B cell (primary cell): ENCODE measurements at regions of chr1 and their contacts with region 1.

Region 1: DNA sequence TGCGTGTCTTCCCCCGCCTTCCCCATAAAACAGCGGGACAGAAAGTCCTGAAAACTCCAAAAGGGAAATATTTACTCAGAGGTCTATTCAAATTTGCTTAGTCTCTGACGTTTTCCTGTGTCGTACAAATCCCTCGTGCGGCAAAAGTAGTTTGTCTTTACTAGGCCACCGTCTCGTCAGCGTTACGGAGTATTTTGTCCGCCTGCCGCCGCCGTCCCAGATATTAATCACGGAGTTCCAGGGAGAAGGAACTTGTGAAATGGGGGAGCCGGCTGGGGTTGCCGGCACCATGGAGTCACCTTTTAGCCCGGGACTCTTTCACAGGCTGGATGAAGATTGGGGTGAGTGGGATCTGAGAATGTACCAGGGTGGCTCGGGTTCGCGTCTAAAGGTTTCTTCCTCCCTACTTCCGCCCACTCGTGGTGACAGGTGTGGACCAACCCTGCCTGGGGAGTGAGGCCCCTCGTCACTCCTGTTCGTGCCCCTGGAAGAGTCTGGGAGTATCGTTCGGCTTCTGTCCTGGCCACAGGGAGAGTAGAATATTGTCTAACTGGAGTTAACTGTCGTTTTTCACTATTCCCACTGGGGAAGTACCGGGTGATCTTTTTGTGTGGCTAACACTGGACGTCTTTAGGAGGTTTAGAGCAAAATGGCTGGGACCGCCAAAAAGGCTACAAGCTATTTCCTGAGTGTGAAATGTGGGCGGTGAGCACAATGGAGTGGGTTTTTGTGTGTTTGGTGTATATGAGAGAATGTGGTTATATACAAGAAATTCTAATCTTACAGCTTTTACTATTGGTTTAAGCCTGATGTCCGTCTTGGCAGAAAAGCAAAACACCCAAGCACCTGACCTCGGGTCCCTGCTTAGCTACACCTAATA is at the start of gene ATF6:
- DNase-seq: peak; percentile 93
- ATAC-seq: peak; percentile 79
- H3K4me3 ChIP-seq: peak within 1 kb of the TSS; percentile 82 to 97 (median 92)
- H3K4me3 Mint-ChIP-seq: peak within 1 kb of the TSS; percentile 99
- H3K27ac ChIP-seq: peak within 1 kb of the TSS; percentile 80 to 96
- H3K27ac Mint-ChIP-seq: peak within 1 kb of the TSS; percentile 95
- H3K4me1 ChIP-seq: peaks cover 32 to 34% of the 10 kb centered on the region in 2 donors
- H3K4me1 Mint-ChIP-seq: peaks cover 49% of the 10 kb centered on the region
- H3K27me3 ChIP-seq: no peaks in the 10 kb centered on the region
- H3K27me3 Mint-ChIP-seq: no peaks in the 10 kb centered on the region
- CTCF ChIP-seq: no peak
- total RNA-seq, gene ATF6: 25.6 and 26.6 TPM in 2 replicates

Region 2: DNA sequence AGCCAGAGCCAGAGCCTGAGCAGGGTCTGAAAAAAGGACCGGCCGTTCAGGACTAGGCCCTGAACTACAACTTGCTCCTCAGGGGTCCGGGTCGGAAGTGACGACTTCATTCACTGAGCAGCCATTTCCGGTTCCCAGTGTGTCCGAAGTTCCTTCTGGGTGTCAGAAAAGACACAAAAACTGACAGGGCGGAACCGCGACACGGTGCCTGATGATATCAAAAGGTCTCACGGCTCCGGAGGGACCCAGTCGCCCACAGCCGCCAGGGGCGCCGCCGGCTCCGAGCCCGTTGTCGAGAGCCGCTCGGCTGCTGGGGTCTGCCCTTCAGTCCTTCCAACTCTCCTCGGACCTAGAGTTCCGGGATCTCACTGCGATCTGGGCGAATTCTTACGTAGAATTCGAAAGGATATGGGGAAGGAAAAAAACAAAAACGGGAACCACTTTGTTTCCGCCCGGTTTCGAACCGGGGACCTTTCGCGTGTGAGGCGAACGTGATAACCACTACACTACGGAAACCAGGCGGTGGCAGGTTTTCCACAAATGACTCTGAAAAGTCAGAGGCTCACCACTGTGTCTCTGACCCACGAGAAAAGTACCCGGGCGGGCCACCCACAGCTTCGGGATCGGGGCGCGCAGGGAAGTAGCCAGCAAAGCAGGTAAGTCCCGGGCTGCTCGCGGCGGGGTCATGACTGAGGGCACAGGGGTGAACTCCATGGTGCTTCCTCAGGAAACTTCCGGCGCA is 366.9 kb before region 1 on chr1:
- CTCF ChIA-PET with region 1: interaction called, 5 read pairs
- POLR2A ChIA-PET with region 1: no interaction called
- intact Hi-C with region 1: loop called (anchors 10 kb)
- DNase-seq: peak; percentile 97
- ATAC-seq: peak; percentile 76
- H3K4me3 ChIP-seq: peak overlapping the region; percentile 76 to 96 (median 86)
- H3K4me3 Mint-ChIP-seq: peak overlapping the region; percentile 100
- H3K27ac ChIP-seq: peak overlapping the region; percentile 97 to 100
- H3K27ac Mint-ChIP-seq: peak overlapping the region; percentile 100
- H3K4me1 ChIP-seq: peaks cover 13 to 20% of the 10 kb centered on the region in 2 donors
- H3K4me1 Mint-ChIP-seq: peaks cover 28% of the 10 kb centered on the region
- H3K27me3 ChIP-seq: no peaks in the 10 kb centered on the region
- H3K27me3 Mint-ChIP-seq: no peaks in the 10 kb centered on the region
- CTCF ChIP-seq: peak; percentile 86

Region 3: DNA sequence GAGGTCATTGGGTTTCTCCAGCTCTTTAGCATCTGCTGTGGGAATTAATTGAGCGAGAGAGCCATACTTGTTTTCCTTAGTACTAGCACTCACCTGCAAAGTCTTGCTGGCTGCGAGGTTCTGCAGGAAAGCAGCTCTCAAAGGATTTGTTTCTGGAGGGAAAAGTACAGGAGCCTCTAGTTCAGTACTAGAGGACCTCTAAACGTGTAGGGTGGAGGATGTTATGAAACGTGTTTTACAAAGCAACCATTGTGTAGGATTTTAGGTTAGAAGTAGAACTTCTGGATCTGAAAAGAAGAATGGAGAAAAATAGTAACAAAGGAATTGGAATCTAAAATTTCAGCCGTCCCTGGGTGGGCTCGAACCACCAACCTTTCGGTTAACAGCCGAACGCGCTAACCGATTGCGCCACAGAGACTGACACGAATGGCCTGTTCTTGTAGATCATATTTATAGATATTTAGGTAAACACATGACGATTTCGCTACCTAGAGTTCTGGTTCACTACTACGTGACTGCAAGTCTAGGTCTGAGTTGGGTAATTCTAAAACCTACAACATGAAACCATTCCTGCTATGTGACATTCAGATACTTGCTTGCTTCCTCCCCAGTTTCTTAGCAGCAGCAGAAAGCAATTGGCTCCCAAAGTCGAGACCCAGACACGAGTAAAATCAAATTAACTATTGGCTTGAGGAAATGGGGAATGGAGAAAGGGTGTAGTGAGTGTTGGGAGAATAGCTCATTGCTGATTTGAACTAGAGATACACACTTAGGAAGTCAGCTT is 338.4 kb before region 1 on chr1:
- CTCF ChIA-PET with region 1: no interaction called
- POLR2A ChIA-PET with region 1: no interaction called
- intact Hi-C with region 1: loop called (anchors 10 kb)
- DNase-seq: peak; percentile 64
- ATAC-seq: peak; percentile 66
- H3K4me3 ChIP-seq: no peak overlapping the region
- H3K4me3 Mint-ChIP-seq: peak overlapping the region; percentile 64
- H3K27ac ChIP-seq: no peak overlapping the region
- H3K27ac Mint-ChIP-seq: peak overlapping the region; percentile 66
- H3K4me1 ChIP-seq: peaks cover 6% of the 10 kb centered on the region in 2 donors
- H3K4me1 Mint-ChIP-seq: peaks cover 12% of the 10 kb centered on the region
- H3K27me3 ChIP-seq: peaks cover 1 to 32% (median 21%) of the 10 kb centered on the region in 4 experiments
- H3K27me3 Mint-ChIP-seq: peaks cover 48% of the 10 kb centered on the region
- CTCF ChIP-seq: no peak

Region 4: GRCh38 chr1:161749509-161750407 is 16.6 kb before region 1 on chr1 and contains the start of gene DUSP12:
- CTCF ChIA-PET with region 1: interaction called, 7 read pairs
- POLR2A ChIA-PET with region 1: interaction called, 10 read pairs
- intact Hi-C with region 1: loop called (anchors 1 kb)
- DNase-seq: peak; percentile 93
- ATAC-seq: peak; percentile 98
- H3K4me3 ChIP-seq: peak within 1 kb of the TSS; percentile 59 to 94 (median 83)
- H3K4me3 Mint-ChIP-seq: peak within 1 kb of the TSS; percentile 100
- H3K27ac ChIP-seq: peak within 1 kb of the TSS; percentile 29 to 66
- H3K27ac Mint-ChIP-seq: peak within 1 kb of the TSS; percentile 97
- H3K4me1 ChIP-seq: peaks cover 18 to 27% of the 10 kb centered on the region in 2 donors
- H3K4me1 Mint-ChIP-seq: peaks cover 32% of the 10 kb centered on the region
- H3K27me3 ChIP-seq: no peaks in the 10 kb centered on the region
- H3K27me3 Mint-ChIP-seq: peaks cover 8% of the 10 kb centered on the region
- CTCF ChIP-seq: no peak
- total RNA-seq, gene DUSP12: 41.2 and 41.9 TPM in 2 replicates

Region 5: DNA sequence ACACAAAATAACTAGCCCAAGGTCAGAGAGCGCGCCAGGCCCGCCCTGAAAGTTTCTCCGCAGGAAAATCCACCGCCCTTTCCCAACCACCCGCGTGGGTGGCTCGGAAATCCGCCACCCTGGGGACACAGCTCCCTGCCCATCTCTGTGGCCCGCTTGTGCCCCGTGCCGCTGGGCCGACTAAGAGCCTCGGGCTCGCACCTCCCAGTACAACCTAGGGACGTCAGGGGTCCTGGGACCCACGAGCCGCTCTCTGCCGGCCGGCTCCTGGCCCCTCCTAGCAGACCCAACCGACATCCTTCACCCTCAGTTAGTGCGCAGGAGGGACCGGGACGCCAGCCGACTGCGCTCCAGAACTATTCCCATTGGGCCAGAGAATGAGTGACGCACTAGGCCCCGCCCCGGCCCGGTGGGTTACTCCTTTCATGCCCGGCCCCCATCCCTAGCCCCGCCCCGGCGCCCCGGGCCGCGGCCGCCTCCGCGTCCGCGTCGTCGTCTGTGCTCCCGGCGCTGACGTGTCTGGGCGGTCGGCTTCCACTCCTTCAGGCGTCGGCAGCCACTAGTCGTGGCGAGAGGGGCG is 794.8 kb after region 1 on chr1:
- CTCF ChIA-PET with region 1: no interaction called
- POLR2A ChIA-PET with region 1: no interaction called
- intact Hi-C with region 1: loop called (anchors 5 kb)
- DNase-seq: peak; percentile 97
- ATAC-seq: peak; percentile 94
- H3K4me3 ChIP-seq: peak overlapping the region; percentile 39 to 87 (median 81)
- H3K4me3 Mint-ChIP-seq: peak overlapping the region; percentile 97
- H3K27ac ChIP-seq: peak overlapping the region; percentile 84 to 91
- H3K27ac Mint-ChIP-seq: peak overlapping the region; percentile 97
- H3K4me1 ChIP-seq: peaks cover 11 to 15% of the 10 kb centered on the region in 2 donors
- H3K4me1 Mint-ChIP-seq: peaks cover 27% of the 10 kb centered on the region
- H3K27me3 ChIP-seq: peaks cover 0 to 5% (median 0%) of the 10 kb centered on the region in 4 experiments
- H3K27me3 Mint-ChIP-seq: no peaks in the 10 kb centered on the region
- CTCF ChIP-seq: no peak